Activated T-helper 1 cell treated with anti-CD3 and anti-CD28 coated beads, Interleukin-12 subunit alpha, Interleukin-12 subunit beta, Interleukin-2, Interleukin-4 antibody, amounts not matched to agents 30 ng/mL and 10 ng/mL and 1 ng/mL, durations not matched to agents 14 hours and 24 hours and 36 hours (primary cell): ENCODE measurements at regions of chr13 and their contacts with region 1.

Region 1: DNA sequence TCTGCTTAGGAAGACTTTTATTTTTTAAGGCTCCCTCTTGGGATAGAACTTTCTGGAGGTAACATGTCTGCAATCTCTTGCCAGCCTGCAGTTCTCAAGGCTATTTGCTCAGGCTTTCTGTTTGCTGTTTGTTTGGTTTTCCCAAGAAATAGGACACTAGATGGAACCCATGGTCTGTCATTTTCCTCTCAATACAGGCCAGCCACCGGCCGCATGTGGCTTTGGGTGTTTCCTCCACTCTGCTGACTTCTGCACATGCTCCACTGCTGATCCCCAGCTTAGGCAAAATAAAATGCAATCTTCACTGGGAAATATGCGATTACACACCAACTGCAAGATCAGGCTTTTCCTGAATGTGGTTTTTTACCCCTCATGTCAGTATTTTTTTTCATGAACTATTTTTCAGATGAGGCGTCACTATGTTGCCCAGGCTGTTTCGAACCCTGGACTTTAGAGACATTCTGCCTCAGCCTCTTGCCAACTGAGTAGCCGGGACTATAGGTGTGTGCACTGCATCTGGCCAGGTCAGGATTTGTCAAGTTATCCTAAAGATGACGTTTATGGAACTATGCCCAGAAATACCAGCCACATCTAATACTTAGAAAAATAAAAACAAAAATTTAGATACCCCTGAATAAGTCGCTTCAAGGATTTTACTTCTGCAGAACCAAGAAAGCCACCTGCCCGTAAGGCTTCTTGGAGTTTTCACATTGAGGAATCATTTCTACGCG is 94.3 kb upstream of the PABPC3 start:
- DNase-seq: no peak
- H3K4me3 Mint-ChIP-seq: no peak overlapping the region
- H3K27ac Mint-ChIP-seq: no peak overlapping the region
- H3K4me1 Mint-ChIP-seq: peaks cover 5% of the 10 kb centered on the region
- H3K27me3 Mint-ChIP-seq: peaks cover 44% of the 10 kb centered on the region

Region 2: GRCh38 chr13:24982333-24982999 is 19.2 kb before region 1 on chr13:
- intact Hi-C with region 1: no loop called
- DNase-seq: no peak
- H3K4me3 Mint-ChIP-seq: no peak overlapping the region
- H3K27ac Mint-ChIP-seq: no peak overlapping the region
- H3K4me1 Mint-ChIP-seq: no peaks in the 10 kb centered on the region
- H3K27me3 Mint-ChIP-seq: peaks cover 21% of the 10 kb centered on the region

Region 3: DNA sequence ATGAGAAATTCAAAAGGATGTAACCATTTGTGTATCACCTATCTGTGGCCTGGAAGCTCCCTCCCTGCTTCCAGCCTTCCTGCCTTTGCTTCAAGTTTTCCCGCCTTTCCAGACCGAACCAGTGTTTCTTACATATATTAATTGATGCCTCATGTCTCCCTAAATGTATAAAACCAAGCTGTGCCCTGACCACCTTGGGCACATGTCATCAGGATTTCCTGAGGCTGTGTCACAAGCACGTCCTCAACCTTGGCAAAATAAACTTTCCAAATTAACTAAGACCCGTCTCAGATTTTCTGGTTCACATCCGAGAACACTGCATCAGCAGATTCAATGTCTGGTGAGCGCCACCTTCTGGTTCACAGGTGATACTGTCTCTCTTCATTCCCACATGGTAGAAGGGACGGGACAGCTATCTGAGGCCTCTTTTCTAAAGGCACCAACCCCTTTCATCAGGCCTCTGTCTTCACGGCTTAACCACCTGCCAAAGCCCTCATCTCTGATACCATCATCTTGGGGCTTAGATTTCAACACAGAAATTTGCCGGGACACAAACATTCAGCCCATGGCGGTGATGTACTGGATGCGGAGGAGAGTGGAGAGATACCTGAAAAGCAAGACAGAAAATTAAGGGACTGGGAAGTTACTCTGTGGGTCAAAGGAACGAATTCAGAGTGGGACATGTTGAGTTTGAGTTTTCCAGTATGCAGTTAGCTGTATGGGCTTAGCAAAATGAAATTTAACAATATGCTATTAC is 35.6 kb after region 1 on chr13:
- intact Hi-C with region 1: loop called (anchors 1 kb)
- DNase-seq: peak; percentile 30
- H3K4me3 Mint-ChIP-seq: no peak overlapping the region
- H3K27ac Mint-ChIP-seq: no peak overlapping the region
- H3K4me1 Mint-ChIP-seq: peaks cover 4% of the 10 kb centered on the region
- H3K27me3 Mint-ChIP-seq: peaks cover 19% of the 10 kb centered on the region

Region 4: GRCh38 chr13:25114220-25114619 is 112.6 kb after region 1 on chr13:
- intact Hi-C with region 1: loop called (anchors 1 kb)
- DNase-seq: peak; percentile 42
- H3K4me3 Mint-ChIP-seq: no peak overlapping the region
- H3K27ac Mint-ChIP-seq: no peak overlapping the region
- H3K4me1 Mint-ChIP-seq: no peaks in the 10 kb centered on the region
- H3K27me3 Mint-ChIP-seq: peaks cover 32% of the 10 kb centered on the region

Region 5: GRCh38 chr13:25262261-25262660 is 260.6 kb after region 1 on chr13:
- intact Hi-C with region 1: no loop called
- DNase-seq: no peak
- H3K4me3 Mint-ChIP-seq: no peak overlapping the region
- H3K27ac Mint-ChIP-seq: no peak overlapping the region
- H3K4me1 Mint-ChIP-seq: no peaks in the 10 kb centered on the region
- H3K27me3 Mint-ChIP-seq: no peaks in the 10 kb centered on the region